ENCODE measurements at regions of chr4 and their contacts with region 1.

Region 1: DNA sequence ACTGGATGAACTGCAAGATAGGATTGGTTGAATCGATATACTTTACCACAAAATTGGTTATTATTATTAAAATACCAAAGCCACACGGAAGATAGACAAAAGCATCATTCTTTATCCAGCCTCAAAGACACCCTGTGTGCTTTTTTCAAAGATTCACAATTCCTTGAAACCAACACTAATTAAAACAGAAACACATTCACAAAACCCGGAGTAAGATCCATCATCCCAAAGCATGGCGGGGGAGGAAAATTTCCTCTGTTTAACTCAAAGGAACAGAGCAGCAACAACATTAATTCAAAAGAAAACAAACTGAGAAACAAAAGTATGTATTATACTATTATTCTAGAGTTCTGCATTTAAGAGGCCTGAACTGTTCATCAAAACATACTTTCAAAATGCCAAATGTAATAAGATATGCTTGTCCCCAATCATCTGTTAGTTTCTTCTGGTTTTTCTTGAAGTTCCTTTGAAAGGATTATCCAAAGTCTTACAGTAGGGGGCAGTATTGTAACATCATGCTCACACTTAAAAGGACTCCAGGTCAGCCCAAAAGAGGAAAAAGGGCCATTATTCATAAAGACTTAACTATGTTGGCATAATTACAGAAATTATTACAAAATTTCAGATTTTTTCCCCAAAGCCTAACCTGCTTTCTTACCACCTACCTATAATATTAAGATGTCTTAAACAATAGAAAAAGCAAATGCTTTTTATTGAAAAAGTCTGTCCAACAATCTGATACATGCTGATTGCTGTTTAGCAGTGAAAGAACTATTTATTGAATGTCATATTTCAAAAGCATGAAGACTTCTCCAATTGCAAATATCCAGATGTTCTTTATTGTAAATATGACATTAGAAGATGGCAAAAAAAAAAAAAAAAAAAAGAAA is 168.7 kb downstream of the SCFD2 start:
- DNase-seq: no peak
- ATAC-seq: peak; percentile 73

Region 2: DNA sequence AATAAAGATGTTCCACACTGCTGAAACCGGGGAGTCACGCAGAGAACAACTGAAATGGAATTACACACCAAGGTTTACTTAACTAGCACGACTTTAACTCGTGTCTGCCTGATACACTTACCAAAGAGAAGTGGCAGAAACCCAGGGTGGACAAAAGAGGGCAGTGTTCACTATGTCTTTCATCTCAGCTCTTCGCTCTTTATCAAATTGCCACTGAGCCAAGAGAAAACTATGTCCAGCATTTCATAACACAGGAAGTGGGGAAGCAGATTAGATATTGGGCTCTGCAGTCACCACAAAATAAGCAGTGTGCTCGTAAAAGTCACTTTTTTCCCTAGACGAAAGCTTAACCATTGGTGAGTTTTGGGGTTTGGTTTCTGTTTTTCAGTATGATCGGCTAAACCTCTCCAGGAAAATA is 711.5 kb after region 1 on chr4:
- intact Hi-C with region 1: loop called (anchors 10 kb)
- DNase-seq: no peak
- ATAC-seq: peak; percentile 94